Heart right ventricle (tissue), 16 donors: ENCODE measurements at regions of chr5 and their contacts with region 1.

Region 1: GRCh38 chr5:96370976-96371375 is 62.1 kb downstream of the PCSK1 start:
- DNase-seq: no peak
- ATAC-seq: no peak
- H3K4me3 ChIP-seq: no peak overlapping the region
- H3K27ac ChIP-seq: no peak overlapping the region
- H3K4me1 ChIP-seq: no peaks in the 10 kb centered on the region
- H3K27me3 ChIP-seq: no peaks in the 10 kb centered on the region
- CTCF ChIP-seq: no peak

Region 2: DNA sequence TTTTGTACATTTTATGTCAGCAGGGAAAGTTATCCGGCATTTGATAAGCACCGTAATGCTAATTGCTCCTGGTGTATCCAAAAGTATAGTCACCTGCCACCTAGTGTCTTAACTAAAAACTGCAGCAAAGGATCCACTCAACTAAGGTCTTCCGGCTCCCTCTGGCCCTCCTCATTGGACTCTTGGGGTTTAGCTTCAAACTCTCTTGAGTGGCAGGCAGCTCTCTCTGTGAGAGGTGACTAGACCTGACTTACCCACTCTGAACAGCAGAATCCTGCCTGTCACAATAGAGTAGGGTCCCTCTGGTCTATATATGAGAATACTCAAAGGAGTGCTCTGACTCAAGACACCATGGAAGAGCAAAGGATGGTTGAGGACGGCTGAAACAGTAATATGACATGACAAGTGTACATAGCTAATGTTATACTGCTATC is 230.9 kb after region 1 on chr5:
- intact Hi-C with region 1: loop called in 1 of 10 experiments (anchors 10 kb)
- DNase-seq: peak in 1 of 2 donors; percentile 77
- ATAC-seq: peak; percentile 63 to 93 (median 88)
- H3K4me3 ChIP-seq: peak overlapping the region in 3 of 10 donors; percentile 16 to 29 (median 19)
- H3K27ac ChIP-seq: peak overlapping the region in 1 of 10 donors; percentile 6
- H3K4me1 ChIP-seq: peaks cover 0 to 16% (median 4%) of the 10 kb centered on the region in 9 donors
- H3K27me3 ChIP-seq: peaks cover 0 to 10% (median 0%) of the 10 kb centered on the region in 7 donors
- CTCF ChIP-seq: peak; percentile 67 to 87 (median 83)